HepG2 (cell line): ENCODE measurements at regions of chr3 and their contacts with region 1.

Region 1: GRCh38 chr3:156535162-156535627 is 19.7 kb downstream of the SSR3 start:
- DNase-seq: peak; percentile 96
- ATAC-seq: peak; percentile 90
- H3K4me3 ChIP-seq: peak overlapping the region in 1 of 3 experiments; percentile 19; a peak in 1 of 6 replicates
- H3K27ac ChIP-seq: peak overlapping the region; percentile 62
- H3K4me1 ChIP-seq: peaks cover 57% of the 10 kb centered on the region
- H3K27me3 ChIP-seq: no peaks in the 10 kb centered on the region
- CTCF ChIP-seq: peak; percentile 75
- EP300 ChIP-seq: peak; percentile 34 to 49; a peak in 3 of 4 replicates
- POLR2A ChIP-seq: peak; percentile 13 to 39; a peak in 1 of 4 replicates
- RAD21 ChIP-seq: peak; percentile 67

Region 2: DNA sequence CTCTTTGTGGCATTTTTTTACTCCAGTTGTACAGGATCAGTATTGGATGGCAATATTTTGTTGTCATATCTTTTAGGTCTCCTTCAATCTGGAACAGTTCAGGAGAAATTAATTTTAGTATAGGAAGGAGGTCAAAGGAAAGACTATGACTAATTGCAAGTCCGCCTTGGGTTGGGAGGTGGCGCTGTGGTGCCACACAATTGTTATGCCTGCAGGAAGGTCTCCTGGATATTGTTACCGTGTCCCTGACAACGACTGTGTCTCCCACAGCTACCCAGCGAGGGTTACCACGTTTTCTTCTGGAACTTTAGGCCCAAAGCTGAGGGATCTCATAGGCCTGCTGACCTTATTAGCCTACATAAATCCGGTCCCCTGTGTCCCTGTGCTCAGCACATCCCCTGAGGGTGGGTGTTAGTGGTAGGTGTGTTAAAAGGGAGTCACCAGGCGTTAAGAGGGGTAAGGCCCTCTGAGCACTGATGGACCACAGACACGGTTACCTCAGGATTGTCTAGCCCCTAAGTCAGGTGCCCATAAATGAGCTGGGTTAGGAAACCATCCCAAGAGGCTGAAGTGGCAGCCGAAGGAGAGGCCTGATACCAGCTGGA is 383.3 kb before region 1 on chr3:
- CTCF ChIA-PET with region 1: no interaction called
- POLR2A ChIA-PET with region 1: interaction called, 4 read pairs
- in situ Hi-C with region 1: no loop called
- intact Hi-C with region 1: loop called (anchors 2 kb)
- DNase-seq: peak; percentile 35
- ATAC-seq: peak; percentile 93
- H3K4me3 ChIP-seq: no peak overlapping the region
- H3K27ac ChIP-seq: no peak overlapping the region
- H3K4me1 ChIP-seq: no peaks in the 10 kb centered on the region
- H3K27me3 ChIP-seq: no peaks in the 10 kb centered on the region
- CTCF ChIP-seq: peak; percentile 85
- EP300 ChIP-seq: no peak
- POLR2A ChIP-seq: no peak
- RAD21 ChIP-seq: peak; percentile 76

Region 3: DNA sequence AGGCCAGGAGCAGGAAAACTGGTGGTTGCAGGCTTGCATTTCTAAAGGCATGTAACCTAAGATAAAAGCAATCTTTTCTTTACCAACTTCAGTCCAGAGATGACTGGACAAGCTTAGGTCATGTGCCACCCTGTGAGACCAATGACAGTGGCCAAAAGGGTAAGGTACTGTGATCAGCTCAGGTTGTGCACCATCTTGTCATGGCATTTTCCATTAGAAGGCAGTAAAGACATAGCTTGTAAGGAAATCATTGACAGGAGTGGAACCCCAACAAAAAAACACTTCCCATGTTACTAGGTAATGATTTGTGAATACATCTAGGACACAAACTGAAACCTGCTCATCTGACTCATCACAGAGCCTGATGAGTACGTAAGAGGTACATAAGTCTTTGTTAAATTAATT is 15.4 kb before region 1 on chr3:
- CTCF ChIA-PET with region 1: no interaction called
- POLR2A ChIA-PET with region 1: interaction called, 3 read pairs
- in situ Hi-C with region 1: no loop called
- intact Hi-C with region 1: loop called (anchors 2 kb)
- DNase-seq: no peak
- ATAC-seq: peak; percentile 25; the same call in 1 of the 3 replicates
- H3K4me3 ChIP-seq: no peak overlapping the region
- H3K27ac ChIP-seq: no peak overlapping the region
- H3K4me1 ChIP-seq: peaks cover 14% of the 10 kb centered on the region
- H3K27me3 ChIP-seq: no peaks in the 10 kb centered on the region
- CTCF ChIP-seq: no peak
- EP300 ChIP-seq: no peak
- POLR2A ChIP-seq: no peak
- RAD21 ChIP-seq: no peak

Region 4: GRCh38 chr3:156554842-156555687 is 19.9 kb after region 1 on chr3 and contains the start of gene SSR3:
- CTCF ChIA-PET with region 1: no interaction called
- POLR2A ChIA-PET with region 1: interaction called, 20 read pairs
- in situ Hi-C with region 1: no loop called
- intact Hi-C with region 1: no loop called
- DNase-seq: peak; percentile 96
- ATAC-seq: peak; percentile 99
- H3K4me3 ChIP-seq: peak within 1 kb of the TSS; percentile 85 to 100 (median 91)
- H3K27ac ChIP-seq: peak within 1 kb of the TSS; percentile 94
- H3K4me1 ChIP-seq: peaks cover 38% of the 10 kb centered on the region
- H3K27me3 ChIP-seq: no peaks in the 10 kb centered on the region; a peak in 2 of 5 replicates
- CTCF ChIP-seq: no peak
- EP300 ChIP-seq: peak in 1 of 2 experiments; percentile 35; a peak in 2 of 4 replicates
- POLR2A ChIP-seq: peak; percentile 88 to 98
- RAD21 ChIP-seq: no peak; the same call in 1 of the 2 replicates
- total RNA-seq, gene SSR3: 268 and 325 TPM in 2 replicates

Region 5: DNA sequence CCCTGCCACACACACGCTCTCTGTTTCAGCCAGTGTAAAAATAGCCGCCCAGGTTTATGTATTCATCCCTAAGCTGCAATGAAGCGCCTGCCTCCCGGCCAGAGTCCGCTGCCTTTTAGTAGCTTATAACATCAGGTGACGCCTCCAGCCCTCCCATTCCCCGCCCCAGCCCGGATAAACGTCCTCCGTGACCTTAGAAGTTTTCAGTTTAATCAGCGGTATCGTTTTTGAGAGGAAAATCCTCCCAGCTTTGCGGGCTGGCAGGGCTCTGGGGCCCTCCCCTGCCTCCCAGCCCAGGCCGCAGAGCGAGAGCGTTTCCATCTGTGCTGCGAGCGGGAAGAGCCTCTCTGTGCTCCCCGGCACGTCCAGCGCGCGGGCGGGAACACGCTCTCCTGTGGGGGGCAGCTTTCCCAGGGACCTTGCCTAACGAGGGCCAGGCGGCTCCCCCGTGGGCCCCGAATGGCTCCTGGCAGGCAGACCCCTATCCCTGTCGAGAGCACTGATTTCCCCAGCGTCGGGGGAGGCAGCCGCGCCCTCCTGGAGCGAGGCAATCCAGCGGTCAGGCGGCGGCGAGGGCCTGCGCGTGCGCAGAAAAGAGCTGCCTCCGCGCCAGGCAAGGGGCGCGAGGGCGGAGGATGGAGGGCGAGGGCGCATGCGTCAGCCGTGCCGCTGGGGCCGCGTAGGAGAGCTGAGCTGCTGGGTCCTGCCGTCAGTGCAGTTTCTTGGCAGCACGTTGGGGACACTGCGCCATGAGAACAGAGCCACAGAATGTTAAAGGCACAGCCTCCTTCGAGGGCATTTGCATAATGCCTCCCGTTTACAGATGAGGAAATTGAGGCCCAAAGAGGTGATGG is 553.6 kb after region 1 on chr3:
- CTCF ChIA-PET with region 1: no interaction called
- POLR2A ChIA-PET with region 1: interaction called, 18 read pairs
- in situ Hi-C with region 1: no loop called
- intact Hi-C with region 1: loop called (anchors 5 kb)
- DNase-seq: peak; percentile 91
- ATAC-seq: peak; percentile 93
- H3K4me3 ChIP-seq: peak overlapping the region; percentile 56 to 67 (median 58)
- H3K27ac ChIP-seq: peak overlapping the region; percentile 96
- H3K4me1 ChIP-seq: peaks cover 43% of the 10 kb centered on the region
- H3K27me3 ChIP-seq: no peaks in the 10 kb centered on the region
- CTCF ChIP-seq: peak; percentile 54
- EP300 ChIP-seq: peak in 1 of 2 experiments; percentile 72; a peak in 1 of 4 replicates
- POLR2A ChIP-seq: peak; percentile 49 to 83
- RAD21 ChIP-seq: 0 out of 2 replicates have a peak, but pooled peaks have one; percentile 35